ENCODE measurements at regions of chr17 and their contacts with region 1.

Region 1: DNA sequence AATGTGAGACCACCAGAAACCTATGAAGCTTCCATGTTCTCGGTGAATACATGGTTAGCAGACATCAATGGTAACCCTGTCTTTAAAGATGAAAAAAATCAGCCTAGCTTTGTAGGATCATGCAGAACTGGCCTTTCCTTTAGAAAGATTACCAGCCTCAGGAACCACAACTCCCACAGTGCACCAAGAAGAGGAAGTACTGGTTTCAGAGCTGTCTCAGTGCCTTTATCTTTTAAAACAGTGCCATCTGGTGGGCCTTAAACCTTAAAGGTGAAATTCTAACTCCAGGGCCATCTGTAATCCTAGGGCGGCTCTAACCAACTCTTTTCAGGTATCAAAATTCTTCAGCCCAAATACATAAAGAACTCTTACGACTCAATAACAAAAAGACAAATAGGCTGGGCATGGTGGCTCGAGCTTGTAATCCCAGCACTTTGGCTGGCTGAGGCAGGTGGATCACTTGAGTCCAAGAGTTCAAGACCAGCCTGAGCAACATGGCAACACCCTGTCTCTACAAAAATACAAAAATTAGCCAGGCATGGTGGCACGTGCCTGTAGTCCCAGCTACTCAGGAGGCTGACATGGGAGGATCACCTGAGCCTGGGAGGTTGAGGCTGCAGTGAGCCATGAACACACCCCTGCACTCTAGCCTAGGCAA is 5.4 kb downstream of the ATPAF2 start:
- DNase-seq: peak; percentile 63
- H3K4me3 ChIP-seq: no peak overlapping the region
- H3K27ac ChIP-seq: no peak overlapping the region
- H3K27me3 ChIP-seq: no peaks in the 10 kb centered on the region
- CTCF ChIP-seq: peak; percentile 63

Region 2: DNA sequence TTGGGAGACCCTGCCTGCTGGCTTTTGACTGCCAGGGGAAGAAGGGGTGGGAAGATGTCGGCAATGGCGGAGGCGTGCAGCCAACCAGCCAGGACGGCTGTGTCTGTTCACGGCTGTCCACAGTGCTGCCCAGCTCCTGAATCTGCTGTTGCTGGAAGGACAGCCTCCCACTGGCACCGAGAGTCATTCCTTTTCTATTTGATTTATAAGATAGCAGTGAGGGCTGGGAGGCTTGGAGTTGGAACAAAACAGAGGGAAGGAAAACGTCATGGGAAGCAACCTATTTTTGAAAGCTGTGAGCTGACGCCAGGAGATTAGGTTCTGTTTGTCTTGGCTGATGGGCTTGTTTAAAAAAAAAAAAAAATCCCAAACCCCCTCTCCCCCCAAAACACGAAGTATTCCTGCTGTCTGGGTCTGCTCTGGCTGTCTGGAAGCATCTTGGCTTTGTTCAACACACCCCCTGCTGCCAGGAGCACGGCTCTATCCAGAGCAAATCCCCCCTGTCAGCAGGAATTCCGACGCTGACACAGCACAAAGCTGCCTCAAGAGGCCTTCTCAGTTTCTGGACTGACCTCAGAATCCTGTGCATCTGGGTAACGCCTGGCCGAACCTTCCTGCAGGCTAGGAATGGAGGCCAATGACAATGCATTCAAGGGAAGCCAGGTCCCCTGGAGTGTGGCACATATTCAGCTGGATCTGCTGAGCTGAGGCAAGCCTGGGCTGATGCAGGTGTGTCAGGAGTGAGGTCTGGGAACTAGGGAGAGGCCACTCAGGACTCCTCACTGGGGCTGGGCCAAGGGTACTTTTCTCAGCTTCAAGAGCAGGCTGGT is 155.8 kb before region 1 on chr17:
- CTCF ChIA-PET with region 1: interaction called, 10 read pairs
- POLR2A ChIA-PET with region 1: no interaction called
- DNase-seq: peak; percentile 67
- H3K4me3 ChIP-seq: no peak overlapping the region
- H3K27ac ChIP-seq: peak overlapping the region; percentile 87
- H3K27me3 ChIP-seq: no peaks in the 10 kb centered on the region
- CTCF ChIP-seq: peak; percentile 23; the same call in 1 of the 2 replicates

Region 3: GRCh38 chr17:17890773-17891759 is 142.5 kb before region 1 on chr17:
- CTCF ChIA-PET with region 1: interaction called, 17 read pairs
- POLR2A ChIA-PET with region 1: no interaction called
- DNase-seq: peak; percentile 42
- H3K4me3 ChIP-seq: no peak overlapping the region
- H3K27ac ChIP-seq: no peak overlapping the region
- H3K27me3 ChIP-seq: no peaks in the 10 kb centered on the region
- CTCF ChIP-seq: peak; percentile 92

Region 4: GRCh38 chr17:17985555-17985954 is 48.0 kb before region 1 on chr17:
- CTCF ChIA-PET with region 1: interaction called, 11 read pairs
- POLR2A ChIA-PET with region 1: no interaction called
- DNase-seq: no peak
- H3K4me3 ChIP-seq: no peak overlapping the region
- H3K27ac ChIP-seq: peak overlapping the region; percentile 2
- H3K27me3 ChIP-seq: no peaks in the 10 kb centered on the region
- CTCF ChIP-seq: peak; percentile 39

Measured in AG04450 (cell line).